HAP-1 (cell line): ENCODE measurements at regions of chr19 and their contacts with region 1.

Region 1: DNA sequence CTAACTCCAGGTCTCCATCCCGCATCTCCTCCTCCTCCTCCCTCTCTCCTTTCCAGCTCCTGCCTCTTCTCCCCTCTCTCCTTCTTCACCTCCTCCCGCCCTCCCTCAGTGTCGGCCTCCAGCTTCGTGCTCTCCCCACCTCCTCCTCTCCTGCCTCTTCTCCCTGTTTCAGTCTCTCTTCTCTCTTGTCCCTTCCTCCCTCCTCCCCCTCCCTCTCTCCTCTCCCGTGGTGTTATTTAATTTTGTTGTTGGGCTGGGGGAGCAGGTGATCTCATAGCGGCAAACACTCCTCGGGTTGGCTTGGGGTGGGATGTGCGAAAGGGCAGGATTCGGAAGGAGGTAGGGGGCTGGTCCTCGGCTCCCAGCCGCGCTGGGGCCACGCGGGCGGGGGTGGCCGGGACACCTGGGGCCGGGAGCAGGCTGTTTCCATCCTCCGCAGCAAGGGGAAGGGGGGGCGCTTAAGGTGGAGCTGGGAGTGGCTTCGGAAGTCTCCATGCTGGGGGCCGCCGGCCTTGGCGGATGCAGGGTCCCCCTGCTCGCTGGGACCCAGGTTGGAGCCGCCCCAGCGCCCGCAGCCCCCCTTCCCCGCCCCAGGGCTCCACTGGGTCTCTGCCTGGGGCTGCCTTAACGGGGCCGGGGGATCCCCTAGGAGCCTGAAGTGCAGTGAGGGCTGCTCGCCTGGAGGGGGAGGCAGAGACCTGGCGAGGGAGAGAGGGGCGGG is at the start of gene CA11:
- DNase-seq: peak; percentile 88 to 97
- H3K4me3 ChIP-seq: peak within 1 kb of the TSS; percentile 40
- H3K4me1 ChIP-seq: peaks cover 15% of the 10 kb centered on the region
- H3K27me3 ChIP-seq: no peaks in the 10 kb centered on the region

Region 2: DNA sequence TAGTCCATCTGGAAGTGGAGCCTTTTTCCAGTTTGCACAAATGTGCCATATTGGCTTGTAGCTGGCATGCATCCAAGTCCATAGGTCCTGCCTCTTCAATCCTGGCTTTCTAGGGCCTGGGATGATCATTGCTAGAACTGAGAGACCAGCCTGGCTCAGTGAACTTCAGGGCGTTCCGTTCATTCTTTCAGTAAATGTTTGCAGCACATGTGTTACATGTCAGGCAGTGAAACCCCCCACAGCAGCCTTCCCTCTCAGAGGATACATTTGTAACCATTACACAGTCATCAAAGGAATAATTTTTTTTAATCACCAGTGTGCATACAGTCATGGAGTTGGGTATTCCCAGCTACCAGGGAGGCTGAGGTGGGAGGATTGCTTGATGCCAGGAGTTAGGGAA is 59.3 kb after region 1 on chr19:
- in situ Hi-C with region 1: no loop called
- DNase-seq: no peak
- H3K4me3 ChIP-seq: no peak overlapping the region
- H3K4me1 ChIP-seq: no peaks in the 10 kb centered on the region
- H3K27me3 ChIP-seq: no peaks in the 10 kb centered on the region

Region 3: DNA sequence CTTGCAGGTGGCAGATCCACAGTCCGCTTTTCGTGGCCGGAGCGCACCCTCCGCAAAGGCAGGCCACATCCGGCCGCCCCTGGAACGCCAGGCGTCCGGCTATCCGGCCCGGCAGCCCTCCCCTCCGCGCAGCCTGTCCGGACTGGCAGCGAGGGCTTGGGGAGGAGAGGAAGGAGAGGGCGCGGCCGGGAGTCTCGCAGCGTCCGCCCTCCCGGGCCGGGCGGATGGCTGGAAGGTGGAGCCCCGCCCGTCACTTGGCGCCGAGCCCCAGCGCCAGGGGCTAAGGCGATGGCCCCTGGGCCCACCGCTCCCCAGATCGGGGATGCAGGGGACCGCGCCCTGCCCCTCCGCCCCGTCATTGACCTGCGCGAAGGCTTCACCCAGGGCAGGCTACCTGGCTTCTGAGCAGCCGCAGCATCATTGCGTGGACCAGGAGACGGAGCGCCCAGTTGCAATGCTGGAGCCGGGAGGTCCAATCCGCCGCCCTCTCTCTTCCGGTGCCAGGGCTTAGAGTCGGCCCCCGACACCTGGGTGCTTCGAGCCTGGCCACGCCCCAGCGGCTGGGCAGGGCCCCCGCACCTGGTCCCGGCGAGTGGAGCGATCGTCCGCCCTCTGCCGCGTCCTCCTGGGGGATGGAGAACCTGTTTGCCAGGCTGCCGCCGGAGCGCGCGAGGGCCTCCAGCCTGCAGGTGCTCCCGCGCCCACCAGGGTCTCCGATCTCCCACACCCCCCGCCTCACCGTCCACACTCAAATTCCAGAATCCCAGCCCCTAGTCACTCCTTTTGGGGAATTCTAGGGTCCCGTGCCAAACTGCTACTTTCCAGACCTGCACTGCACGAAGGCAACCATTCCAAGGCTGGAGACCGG is 106.6 kb after region 1 on chr19 and contains the start of gene FUT1:
- in situ Hi-C with region 1: no loop called
- DNase-seq: peak; percentile 52 to 82
- H3K4me3 ChIP-seq: peak within 1 kb of the TSS; percentile 48
- H3K4me1 ChIP-seq: peaks cover 8% of the 10 kb centered on the region
- H3K27me3 ChIP-seq: no peaks in the 10 kb centered on the region

Region 4: GRCh38 chr19:48835734-48836088 is 189.6 kb after region 1 on chr19:
- in situ Hi-C with region 1: loop called (anchors 5 kb)
- DNase-seq: peak; percentile 86 to 97
- H3K4me3 ChIP-seq: peak overlapping the region; percentile 11
- H3K4me1 ChIP-seq: peaks cover 5% of the 10 kb centered on the region
- H3K27me3 ChIP-seq: no peaks in the 10 kb centered on the region

Region 5: DNA sequence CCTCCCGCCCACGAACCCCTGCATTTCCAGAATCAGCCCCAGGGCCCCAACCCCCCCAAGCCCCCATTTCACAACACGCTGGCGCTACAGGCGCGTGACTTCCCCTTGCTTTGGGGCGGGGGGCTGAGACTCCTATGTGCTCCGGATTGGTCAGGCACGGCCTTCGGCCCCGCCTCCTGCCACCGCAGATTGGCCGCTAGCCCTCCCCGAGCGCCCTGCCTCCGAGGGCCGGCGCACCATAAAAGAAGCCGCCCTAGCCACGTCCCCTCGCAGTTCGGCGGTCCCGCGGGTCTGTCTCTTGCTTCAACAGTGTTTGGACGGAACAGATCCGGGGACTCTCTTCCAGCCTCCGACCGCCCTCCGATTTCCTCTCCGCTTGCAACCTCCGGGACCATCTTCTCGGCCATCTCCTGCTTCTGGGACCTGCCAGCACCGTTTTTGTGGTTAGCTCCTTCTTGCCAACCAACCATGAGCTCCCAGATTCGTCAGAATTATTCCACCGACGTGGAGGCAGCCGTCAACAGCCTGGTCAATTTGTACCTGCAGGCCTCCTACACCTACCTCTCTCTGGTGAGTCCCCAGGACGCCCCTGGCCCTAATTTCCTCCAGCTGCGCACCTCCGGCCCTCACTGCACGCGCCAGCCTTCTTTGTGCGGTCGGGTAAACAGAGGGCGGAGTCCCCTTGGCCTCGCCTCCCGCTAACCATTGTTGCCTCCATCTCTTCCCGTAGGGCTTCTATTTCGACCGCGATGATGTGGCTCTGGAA is 319.1 kb after region 1 on chr19 and contains the start of gene FTL:
- in situ Hi-C with region 1: loop called (anchors 10 kb)
- DNase-seq: peak; percentile 94 to 96
- H3K4me3 ChIP-seq: peak within 1 kb of the TSS; percentile 91
- H3K4me1 ChIP-seq: peaks cover 16% of the 10 kb centered on the region
- H3K27me3 ChIP-seq: no peaks in the 10 kb centered on the region

Region 6: DNA sequence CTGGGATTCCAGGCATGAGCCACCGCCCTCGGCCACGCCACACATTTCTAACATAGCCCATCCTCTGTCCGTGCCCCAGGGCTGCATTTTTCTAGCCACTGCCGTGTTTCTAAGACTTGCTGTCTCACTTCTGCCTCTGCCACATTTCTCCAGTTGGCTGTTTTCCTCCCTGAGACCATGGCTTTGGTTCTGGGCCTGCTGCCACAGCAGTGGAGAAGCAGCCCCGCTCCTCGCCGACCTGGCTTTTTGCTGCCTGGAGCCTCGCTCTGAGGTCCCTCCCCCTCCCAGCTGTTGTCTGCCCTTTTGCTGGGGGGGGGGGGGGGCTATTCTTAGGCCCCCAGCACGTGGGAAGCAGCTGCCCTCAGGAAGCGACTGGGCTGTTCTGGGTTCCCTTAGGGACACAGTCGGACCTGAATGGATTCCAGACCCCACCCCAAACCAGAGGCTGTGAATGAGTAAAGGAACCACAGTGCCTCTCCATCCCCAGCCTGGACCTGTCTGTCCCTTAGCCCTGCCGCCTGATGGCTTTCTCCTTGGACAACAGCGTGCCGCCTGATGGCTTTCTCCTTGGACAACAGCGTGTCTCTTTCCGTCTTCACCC is 343.6 kb after region 1 on chr19:
- in situ Hi-C with region 1: no loop called
- DNase-seq: no peak
- H3K4me3 ChIP-seq: no peak overlapping the region
- H3K4me1 ChIP-seq: no peaks in the 10 kb centered on the region; the same call in 1 of the 2 replicates
- H3K27me3 ChIP-seq: no peaks in the 10 kb centered on the region